CD8-positive, alpha-beta memory T cell (primary cell): ENCODE measurements at regions of chr19 and their contacts with region 1.

Region 1: GRCh38 chr19:543910-544608 is at the start of gene GZMM:
- DNase-seq: peak; percentile 78 to 91 (median 83)
- H3K4me3 ChIP-seq: peak within 1 kb of the TSS; percentile 89
- H3K4me3 Mint-ChIP-seq: peak within 1 kb of the TSS; percentile 92 to 99 (median 94)
- H3K27ac ChIP-seq: peak within 1 kb of the TSS; percentile 87
- H3K27ac Mint-ChIP-seq: peak within 1 kb of the TSS; percentile 90 to 99 (median 96)
- H3K4me1 ChIP-seq: peaks cover 17% of the 10 kb centered on the region
- H3K4me1 Mint-ChIP-seq: peaks cover 19 to 36% (median 20%) of the 10 kb centered on the region in 3 donors
- H3K27me3 ChIP-seq: no peaks in the 10 kb centered on the region
- H3K27me3 Mint-ChIP-seq: peaks cover 0 to 6% of the 10 kb centered on the region in 2 donors
- total RNA-seq, gene GZMM: 48.8 to 50.5 TPM

Region 2: DNA sequence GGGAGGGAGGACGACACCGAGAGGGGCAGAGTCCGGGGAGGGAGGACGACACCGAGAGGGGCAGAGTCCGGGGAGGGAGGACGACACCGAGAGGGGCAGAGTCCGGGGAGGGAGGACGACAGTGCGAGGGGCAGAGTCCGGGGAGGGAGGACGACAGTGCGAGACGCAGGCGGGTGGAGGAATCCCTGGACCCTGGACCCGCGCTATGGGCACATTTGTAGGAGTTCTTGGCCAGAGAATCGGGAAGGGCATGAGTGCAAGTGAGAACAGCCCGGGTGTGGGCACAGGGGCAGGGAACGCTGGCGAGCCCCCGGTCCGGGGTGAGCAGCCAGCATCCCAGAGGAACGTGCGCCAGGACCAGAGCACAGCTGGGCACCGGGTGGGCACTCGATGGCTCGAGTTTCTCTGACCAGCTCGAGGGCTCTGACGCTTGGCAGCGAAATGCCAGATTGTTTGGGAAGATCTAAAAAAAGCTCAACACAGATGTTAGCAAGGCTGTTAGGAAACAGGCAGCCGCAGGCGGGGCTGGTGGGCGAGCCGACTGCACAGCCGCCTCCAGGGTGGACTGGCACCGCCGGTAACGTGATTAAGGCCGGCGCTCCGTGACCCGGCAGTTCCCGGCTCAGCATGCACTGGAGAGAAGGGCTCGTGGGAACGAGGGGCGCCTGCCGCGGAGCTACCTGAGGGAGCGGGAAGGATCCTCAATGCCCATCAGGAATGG is 117.2 kb before region 1 on chr19:
- CTCF ChIA-PET with region 1: no interaction called
- POLR2A ChIA-PET with region 1: no interaction called
- DNase-seq: no peak
- H3K4me3 ChIP-seq: no peak overlapping the region
- H3K4me3 Mint-ChIP-seq: no peak overlapping the region
- H3K27ac ChIP-seq: no peak overlapping the region
- H3K27ac Mint-ChIP-seq: no peak overlapping the region
- H3K4me1 ChIP-seq: no peaks in the 10 kb centered on the region
- H3K4me1 Mint-ChIP-seq: no peaks in the 10 kb centered on the region
- H3K27me3 ChIP-seq: no peaks in the 10 kb centered on the region
- H3K27me3 Mint-ChIP-seq: no peaks in the 10 kb centered on the region

Region 3: GRCh38 chr19:531009-531752 is 12.9 kb before region 1 on chr19:
- CTCF ChIA-PET with region 1: interaction called, 22 read pairs
- POLR2A ChIA-PET with region 1: interaction called, 10 read pairs
- DNase-seq: peak; percentile 84 to 95 (median 91)
- H3K4me3 ChIP-seq: peak overlapping the region; percentile 53
- H3K4me3 Mint-ChIP-seq: peak overlapping the region; percentile 79 to 94 (median 85)
- H3K27ac ChIP-seq: peak overlapping the region; percentile 74
- H3K27ac Mint-ChIP-seq: peak overlapping the region; percentile 54 to 91 (median 84)
- H3K4me1 ChIP-seq: peaks cover 19% of the 10 kb centered on the region
- H3K4me1 Mint-ChIP-seq: peaks cover 9 to 29% (median 18%) of the 10 kb centered on the region in 3 donors
- H3K27me3 ChIP-seq: no peaks in the 10 kb centered on the region
- H3K27me3 Mint-ChIP-seq: peaks cover 1 to 4% of the 10 kb centered on the region in 2 donors

Region 4: DNA sequence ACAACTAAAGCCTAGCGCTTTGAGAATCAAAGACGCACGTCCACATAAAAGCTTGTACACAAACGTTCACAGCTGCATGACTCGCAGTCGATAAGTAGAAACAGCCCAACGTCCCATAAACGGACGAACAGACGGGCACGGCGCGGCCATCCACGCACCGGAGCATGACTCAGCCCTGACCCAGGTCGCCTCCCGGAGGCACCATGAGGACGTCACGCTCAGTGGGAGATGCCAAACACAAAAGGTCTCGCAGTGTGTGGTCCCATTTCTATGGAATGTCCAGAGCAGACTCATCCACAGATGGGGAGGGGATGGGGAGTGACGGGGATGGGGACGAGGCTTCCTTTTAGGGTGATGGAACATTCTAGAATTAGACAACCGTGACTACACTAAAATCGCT is 79.9 kb after region 1 on chr19:
- CTCF ChIA-PET with region 1: no interaction called
- POLR2A ChIA-PET with region 1: no interaction called
- DNase-seq: no peak
- H3K4me3 ChIP-seq: no peak overlapping the region
- H3K4me3 Mint-ChIP-seq: peak overlapping the region in 1 of 7 donors; percentile 5
- H3K27ac ChIP-seq: no peak overlapping the region
- H3K27ac Mint-ChIP-seq: no peak overlapping the region
- H3K4me1 ChIP-seq: no peaks in the 10 kb centered on the region
- H3K4me1 Mint-ChIP-seq: peaks cover 5 to 17% (median 5%) of the 10 kb centered on the region in 3 donors
- H3K27me3 ChIP-seq: no peaks in the 10 kb centered on the region
- H3K27me3 Mint-ChIP-seq: no peaks in the 10 kb centered on the region

Region 5: GRCh38 chr19:970695-971094 is 426.6 kb after region 1 on chr19:
- CTCF ChIA-PET with region 1: no interaction called
- POLR2A ChIA-PET with region 1: no interaction called
- DNase-seq: no peak
- H3K4me3 ChIP-seq: no peak overlapping the region
- H3K4me3 Mint-ChIP-seq: no peak overlapping the region
- H3K27ac ChIP-seq: no peak overlapping the region
- H3K27ac Mint-ChIP-seq: no peak overlapping the region
- H3K4me1 ChIP-seq: no peaks in the 10 kb centered on the region
- H3K4me1 Mint-ChIP-seq: no peaks in the 10 kb centered on the region
- H3K27me3 ChIP-seq: no peaks in the 10 kb centered on the region
- H3K27me3 Mint-ChIP-seq: no peaks in the 10 kb centered on the region